B cell (primary cell): ENCODE measurements at regions of chr6 and their contacts with region 1.

Region 1: GRCh38 chr6:7154341-7155139 is 46.8 kb downstream of the RREB1 start:
- DNase-seq: peak; percentile 68
- ATAC-seq: peak; percentile 69
- H3K4me3 ChIP-seq: peak overlapping the region in 2 of 5 experiments; percentile 12 to 38
- H3K4me3 Mint-ChIP-seq: peak overlapping the region; percentile 64
- H3K27ac ChIP-seq: peak overlapping the region; percentile 65 to 90
- H3K27ac Mint-ChIP-seq: peak overlapping the region; percentile 81
- H3K4me1 ChIP-seq: peaks cover 46 to 50% of the 10 kb centered on the region in 2 donors
- H3K4me1 Mint-ChIP-seq: peaks cover 81% of the 10 kb centered on the region
- H3K27me3 ChIP-seq: no peaks in the 10 kb centered on the region
- H3K27me3 Mint-ChIP-seq: no peaks in the 10 kb centered on the region
- CTCF ChIP-seq: no peak

Region 2: GRCh38 chr6:6746333-6746969 is 408.1 kb before region 1 on chr6:
- CTCF ChIA-PET with region 1: no interaction called
- POLR2A ChIA-PET with region 1: interaction called, 15 read pairs
- intact Hi-C with region 1: no loop called
- DNase-seq: no peak
- ATAC-seq: no peak
- H3K4me3 ChIP-seq: no peak overlapping the region
- H3K4me3 Mint-ChIP-seq: no peak overlapping the region
- H3K27ac ChIP-seq: no peak overlapping the region
- H3K27ac Mint-ChIP-seq: no peak overlapping the region
- H3K4me1 ChIP-seq: no peaks in the 10 kb centered on the region
- H3K4me1 Mint-ChIP-seq: no peaks in the 10 kb centered on the region
- H3K27me3 ChIP-seq: peaks cover 0 to 4% (median 0%) of the 10 kb centered on the region in 4 experiments
- H3K27me3 Mint-ChIP-seq: peaks cover 18% of the 10 kb centered on the region
- CTCF ChIP-seq: no peak

Region 3: DNA sequence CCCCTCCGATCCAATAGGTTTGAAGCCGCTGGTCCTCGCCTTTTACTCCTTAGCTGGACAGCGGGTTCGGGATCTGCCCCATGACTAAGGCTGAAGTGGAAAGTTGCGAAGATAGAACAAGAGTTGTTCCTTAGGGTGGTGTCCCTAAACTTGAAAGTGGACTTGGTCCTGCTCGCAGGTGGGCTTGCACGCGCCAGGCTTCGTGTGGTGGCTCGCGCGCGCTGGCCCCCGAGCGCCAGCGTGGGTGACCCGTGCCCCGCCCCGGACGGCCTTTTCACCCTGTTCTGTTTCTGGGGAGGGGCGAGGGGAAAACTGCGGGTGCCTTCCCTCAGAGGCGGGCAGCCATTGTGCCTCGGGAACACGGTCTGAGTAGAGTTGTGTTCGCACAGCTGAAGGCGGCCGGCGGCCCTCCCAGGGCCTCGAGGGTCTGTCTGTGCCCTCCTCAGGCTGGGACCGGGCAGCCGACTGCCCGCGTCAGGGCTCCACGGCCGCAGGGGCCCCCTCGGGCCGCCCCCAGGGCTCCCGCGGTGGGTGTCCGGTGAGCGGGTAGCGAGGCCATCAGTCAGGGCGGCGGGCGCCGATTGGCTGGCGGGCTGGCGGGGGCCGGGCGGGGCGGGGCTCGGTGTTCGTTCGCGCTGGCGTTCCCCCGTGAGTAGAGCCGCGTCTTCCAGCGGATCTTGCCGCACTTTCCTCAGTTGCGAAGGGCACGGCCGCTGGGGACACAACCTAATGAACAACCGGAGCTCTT is 13.7 kb before region 1 on chr6:
- CTCF ChIA-PET with region 1: interaction called, 17 read pairs
- POLR2A ChIA-PET with region 1: interaction called, 3 read pairs
- intact Hi-C with region 1: loop called (anchors 2 kb)
- DNase-seq: peak; percentile 84
- ATAC-seq: peak; percentile 84
- H3K4me3 ChIP-seq: peak overlapping the region; percentile 62 to 73 (median 69)
- H3K4me3 Mint-ChIP-seq: peak overlapping the region; percentile 87
- H3K27ac ChIP-seq: peak overlapping the region; percentile 74 to 79
- H3K27ac Mint-ChIP-seq: peak overlapping the region; percentile 90
- H3K4me1 ChIP-seq: peaks cover 53 to 66% of the 10 kb centered on the region in 2 donors
- H3K4me1 Mint-ChIP-seq: peaks cover 74% of the 10 kb centered on the region
- H3K27me3 ChIP-seq: no peaks in the 10 kb centered on the region
- H3K27me3 Mint-ChIP-seq: no peaks in the 10 kb centered on the region
- CTCF ChIP-seq: no peak

Region 4: DNA sequence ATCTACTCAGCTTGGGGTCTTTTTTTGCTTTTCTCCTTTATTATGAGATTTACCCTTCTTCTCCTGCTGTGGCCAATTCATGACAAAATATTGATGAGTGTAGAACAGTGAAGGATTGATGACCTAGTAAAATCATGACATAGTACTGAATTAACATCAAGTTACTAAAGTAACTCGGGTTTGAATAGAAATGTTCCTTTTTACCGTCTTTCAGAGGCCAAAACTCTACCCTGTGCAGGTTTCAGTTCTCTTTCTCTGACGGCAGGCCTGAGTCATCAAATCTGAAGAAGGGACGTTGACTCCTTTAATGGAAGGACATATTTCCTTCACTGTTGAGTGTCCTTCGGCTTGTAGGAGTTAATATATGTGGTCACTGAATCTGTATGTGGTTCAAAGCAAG is 34.0 kb after region 1 on chr6:
- CTCF ChIA-PET with region 1: no interaction called
- POLR2A ChIA-PET with region 1: no interaction called
- intact Hi-C with region 1: loop called (anchors 5 kb)
- DNase-seq: peak; percentile 51
- ATAC-seq: peak; percentile 79
- H3K4me3 ChIP-seq: no peak overlapping the region
- H3K4me3 Mint-ChIP-seq: peak overlapping the region; percentile 33
- H3K27ac ChIP-seq: peak overlapping the region in 1 of 2 donors; percentile 47
- H3K27ac Mint-ChIP-seq: peak overlapping the region; percentile 71
- H3K4me1 ChIP-seq: peaks cover 8 to 14% of the 10 kb centered on the region in 2 donors
- H3K4me1 Mint-ChIP-seq: peaks cover 16% of the 10 kb centered on the region
- H3K27me3 ChIP-seq: no peaks in the 10 kb centered on the region
- H3K27me3 Mint-ChIP-seq: no peaks in the 10 kb centered on the region
- CTCF ChIP-seq: no peak

Region 5: DNA sequence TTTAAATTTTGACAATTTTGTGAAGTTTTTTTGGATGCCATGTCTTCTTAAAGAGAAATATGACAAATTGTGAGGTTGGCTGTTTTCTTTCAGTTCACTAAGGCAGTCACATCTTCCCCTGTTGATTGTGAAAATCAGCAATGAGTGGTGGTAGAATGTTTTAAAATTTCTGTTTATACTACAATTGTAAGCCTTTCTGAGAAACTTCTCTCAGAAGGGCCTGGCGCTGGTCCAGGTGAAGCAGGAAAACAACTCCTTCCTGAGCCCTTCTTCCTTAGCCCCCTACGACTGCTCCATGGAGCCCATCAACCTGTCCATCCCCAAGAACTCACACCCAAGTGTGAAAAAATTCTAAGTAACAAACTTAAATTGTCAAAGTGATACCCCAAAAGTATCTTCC is 77.8 kb after region 1 on chr6:
- CTCF ChIA-PET with region 1: no interaction called
- POLR2A ChIA-PET with region 1: no interaction called
- intact Hi-C with region 1: no loop called
- DNase-seq: no peak
- ATAC-seq: no peak
- H3K4me3 ChIP-seq: no peak overlapping the region
- H3K4me3 Mint-ChIP-seq: no peak overlapping the region
- H3K27ac ChIP-seq: no peak overlapping the region
- H3K27ac Mint-ChIP-seq: peak overlapping the region; percentile 37
- H3K4me1 ChIP-seq: peaks cover 5 to 20% of the 10 kb centered on the region in 2 donors
- H3K4me1 Mint-ChIP-seq: peaks cover 29% of the 10 kb centered on the region
- H3K27me3 ChIP-seq: no peaks in the 10 kb centered on the region
- H3K27me3 Mint-ChIP-seq: no peaks in the 10 kb centered on the region
- CTCF ChIP-seq: no peak